A673 (cell line): ENCODE measurements at regions of chr11 and their contacts with region 1.

Region 1: DNA sequence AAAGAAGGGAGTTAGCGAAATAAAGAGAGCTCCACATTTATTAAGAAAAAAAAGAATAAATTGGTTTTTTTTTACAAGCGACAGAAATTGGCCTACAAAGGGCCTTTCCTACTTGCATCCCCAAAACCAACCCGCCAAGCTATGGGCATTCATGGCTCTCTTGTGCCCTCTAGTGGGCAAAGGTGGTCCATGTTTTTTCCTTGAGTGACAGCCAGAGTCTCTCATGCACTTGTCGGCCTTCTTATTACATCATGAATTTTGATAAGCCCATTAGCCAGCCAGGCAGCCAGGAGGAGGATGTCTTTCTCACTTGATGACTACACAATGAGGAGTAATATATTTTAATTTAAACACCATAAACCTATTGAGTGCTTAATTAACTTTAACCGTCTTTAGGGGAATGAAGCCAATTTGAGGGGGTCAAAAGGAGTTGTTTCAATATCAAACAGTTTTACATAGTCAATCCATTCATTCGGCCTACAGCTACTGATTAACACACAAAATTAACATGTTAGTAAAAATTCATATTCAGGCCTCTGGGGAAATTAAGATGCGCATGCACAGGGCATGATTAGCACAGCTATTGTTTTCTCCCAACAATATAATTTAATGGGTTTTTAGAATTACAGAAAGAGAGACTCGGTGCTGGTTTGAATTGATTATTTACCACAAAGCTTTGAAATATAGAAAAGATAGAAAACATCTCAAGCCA is 85.5 kb downstream of the RCN1 start:
- DNase-seq: peak; percentile 100
- H3K4me3 ChIP-seq: no peak overlapping the region
- H3K27ac ChIP-seq: no peak overlapping the region
- H3K4me1 ChIP-seq: peaks cover 4% of the 10 kb centered on the region
- H3K27me3 ChIP-seq: peaks cover 38% of the 10 kb centered on the region
- CTCF ChIP-seq: peak; percentile 100

Region 2: DNA sequence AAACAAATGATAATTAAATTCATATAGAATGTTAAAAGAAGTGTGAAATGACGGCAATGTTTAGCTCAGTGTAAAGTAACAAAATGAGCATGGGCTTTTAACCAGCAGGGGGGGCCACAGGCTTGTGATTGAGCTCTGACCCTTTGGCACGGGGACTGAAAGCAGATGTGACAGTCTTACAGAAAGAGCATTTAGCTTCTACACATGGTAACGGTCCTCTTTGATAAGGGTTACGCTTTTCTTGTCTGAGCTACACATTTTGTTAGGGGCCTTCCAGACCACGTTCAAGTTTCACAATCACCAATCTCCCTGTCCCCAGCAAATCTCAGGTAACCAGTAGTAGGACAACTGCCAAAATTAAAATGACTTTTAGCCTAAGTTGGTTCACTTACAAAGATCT is 1069.3 kb before region 1 on chr11:
- CTCF ChIA-PET with region 1: interaction called, 14 read pairs
- POLR2A ChIA-PET with region 1: no interaction called
- intact Hi-C with region 1: loop called (anchors 2 kb)
- DNase-seq: peak; percentile 95
- H3K4me3 ChIP-seq: no peak overlapping the region
- H3K27ac ChIP-seq: no peak overlapping the region
- H3K4me1 ChIP-seq: peaks cover 29% of the 10 kb centered on the region
- H3K27me3 ChIP-seq: no peaks in the 10 kb centered on the region
- CTCF ChIP-seq: peak; percentile 100

Region 3: GRCh38 chr11:31397239-31397834 is 779.0 kb before region 1 on chr11:
- CTCF ChIA-PET with region 1: interaction called, 3 read pairs
- POLR2A ChIA-PET with region 1: no interaction called
- intact Hi-C with region 1: loop called (anchors 5 kb)
- DNase-seq: peak; percentile 69
- H3K4me3 ChIP-seq: no peak overlapping the region
- H3K27ac ChIP-seq: no peak overlapping the region
- H3K4me1 ChIP-seq: no peaks in the 10 kb centered on the region
- H3K27me3 ChIP-seq: no peaks in the 10 kb centered on the region
- CTCF ChIP-seq: peak; percentile 99

Region 4: GRCh38 chr11:31687256-31687655 is 489.1 kb before region 1 on chr11:
- CTCF ChIA-PET with region 1: no interaction called
- POLR2A ChIA-PET with region 1: no interaction called
- intact Hi-C with region 1: loop called (anchors 10 kb)
- DNase-seq: no peak
- H3K4me3 ChIP-seq: no peak overlapping the region
- H3K27ac ChIP-seq: no peak overlapping the region
- H3K4me1 ChIP-seq: no peaks in the 10 kb centered on the region
- H3K27me3 ChIP-seq: no peaks in the 10 kb centered on the region
- CTCF ChIP-seq: no peak

Region 5: DNA sequence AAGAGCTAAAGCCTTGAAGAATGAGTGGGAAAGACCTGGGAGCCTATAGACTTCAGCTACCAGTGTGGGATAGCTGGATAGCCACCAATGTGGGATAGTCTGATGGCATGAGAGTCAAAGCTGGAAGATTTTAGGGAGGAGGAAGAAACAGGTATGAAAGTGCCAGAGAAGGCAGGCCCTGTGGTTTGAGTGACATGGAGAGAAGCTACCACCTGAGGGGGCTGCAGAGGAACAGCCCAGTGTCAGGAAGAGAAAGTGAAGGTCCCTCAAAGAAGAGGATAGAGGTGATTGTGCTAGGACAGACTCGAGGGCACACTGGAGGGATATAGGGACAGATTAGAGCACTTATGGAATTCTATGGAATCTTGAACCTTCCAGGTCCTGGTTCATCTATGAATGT is 342.1 kb before region 1 on chr11:
- CTCF ChIA-PET with region 1: no interaction called
- POLR2A ChIA-PET with region 1: no interaction called
- intact Hi-C with region 1: no loop called
- DNase-seq: no peak
- H3K4me3 ChIP-seq: no peak overlapping the region
- H3K27ac ChIP-seq: no peak overlapping the region
- H3K4me1 ChIP-seq: no peaks in the 10 kb centered on the region
- H3K27me3 ChIP-seq: peaks cover 99% of the 10 kb centered on the region
- CTCF ChIP-seq: 0 out of 2 replicates have a peak, but pooled peaks have one; percentile 30

Region 6: GRCh38 chr11:32052218-32052617 is 124.2 kb before region 1 on chr11:
- CTCF ChIA-PET with region 1: interaction called, 37 read pairs
- POLR2A ChIA-PET with region 1: no interaction called
- intact Hi-C with region 1: loop called (anchors 1 kb)
- DNase-seq: peak; percentile 93
- H3K4me3 ChIP-seq: no peak overlapping the region
- H3K27ac ChIP-seq: no peak overlapping the region
- H3K4me1 ChIP-seq: peaks cover 4% of the 10 kb centered on the region
- H3K27me3 ChIP-seq: peaks cover 49% of the 10 kb centered on the region
- CTCF ChIP-seq: peak; percentile 100